Caco-2 (cell line): ENCODE measurements at regions of chr9 and their contacts with region 1.

Region 1: GRCh38 chr9:121201738-121202533 is at the start of gene RAB14:
- DNase-seq: peak; percentile 99
- H3K4me3 ChIP-seq: peak within 1 kb of the TSS; percentile 93
- H3K4me3 Mint-ChIP-seq: peak within 1 kb of the TSS; percentile 83
- H3K27ac Mint-ChIP-seq: peak within 1 kb of the TSS; percentile 72
- H3K4me1 ChIP-seq: peaks cover 24% of the 10 kb centered on the region
- H3K4me1 Mint-ChIP-seq: peaks cover 13% of the 10 kb centered on the region
- H3K27me3 ChIP-seq: no peaks in the 10 kb centered on the region
- H3K27me3 Mint-ChIP-seq: no peaks in the 10 kb centered on the region
- CTCF ChIP-seq: peak; percentile 43 to 68
- total RNA-seq, gene RAB14: 70.3 and 73.2 TPM in 2 replicates

Region 2: GRCh38 chr9:121121582-121122087 is 80.3 kb before region 1 on chr9:
- CTCF ChIA-PET with region 1: no interaction called
- POLR2A ChIA-PET with region 1: no interaction called
- intact Hi-C with region 1: loop called (anchors 5 kb)
- DNase-seq: peak; percentile 97
- H3K4me3 ChIP-seq: peak overlapping the region; percentile 48
- H3K4me3 Mint-ChIP-seq: peak overlapping the region; percentile 92
- H3K27ac Mint-ChIP-seq: peak overlapping the region; percentile 84
- H3K4me1 ChIP-seq: peaks cover 3% of the 10 kb centered on the region; the same call in 1 of the 2 replicates
- H3K4me1 Mint-ChIP-seq: no peaks in the 10 kb centered on the region
- H3K27me3 ChIP-seq: no peaks in the 10 kb centered on the region
- H3K27me3 Mint-ChIP-seq: no peaks in the 10 kb centered on the region
- CTCF ChIP-seq: no peak

Region 3: DNA sequence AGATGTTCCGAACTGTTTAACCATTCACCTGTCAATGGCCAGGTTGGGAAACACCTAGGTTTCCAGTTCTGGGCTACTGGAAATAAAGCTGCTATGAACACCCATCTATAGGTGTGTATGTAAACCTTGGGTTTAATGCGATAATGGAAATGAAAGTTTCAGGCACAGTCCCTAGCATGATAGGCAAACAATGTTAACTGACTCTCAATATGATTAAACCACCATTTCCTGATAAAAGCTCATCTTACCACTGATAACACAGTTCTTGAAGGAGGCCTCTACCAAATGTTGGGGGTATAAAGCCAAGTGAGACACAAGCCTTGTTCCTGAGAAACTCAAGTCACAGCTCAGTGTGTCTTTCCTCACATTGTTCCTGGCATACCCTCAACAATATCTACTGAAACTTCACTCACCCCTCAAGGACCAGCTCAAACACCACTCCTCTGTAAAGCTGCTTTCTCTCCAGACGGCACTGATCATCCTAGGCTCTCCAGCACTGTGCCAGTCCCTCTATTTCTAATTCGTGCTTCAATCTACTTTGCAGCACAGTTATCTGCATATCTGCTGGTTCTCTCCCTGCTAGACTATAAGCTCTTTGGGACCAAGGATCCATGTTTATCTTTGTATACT is 16.0 kb before region 1 on chr9:
- CTCF ChIA-PET with region 1: no interaction called
- POLR2A ChIA-PET with region 1: no interaction called
- intact Hi-C with region 1: loop called (anchors 2 kb)
- DNase-seq: no peak
- H3K4me3 ChIP-seq: no peak overlapping the region
- H3K4me3 Mint-ChIP-seq: no peak overlapping the region
- H3K27ac Mint-ChIP-seq: no peak overlapping the region
- H3K4me1 ChIP-seq: peaks cover 42% of the 10 kb centered on the region
- H3K4me1 Mint-ChIP-seq: peaks cover 46% of the 10 kb centered on the region
- H3K27me3 ChIP-seq: no peaks in the 10 kb centered on the region
- H3K27me3 Mint-ChIP-seq: no peaks in the 10 kb centered on the region
- CTCF ChIP-seq: no peak